AG04449 (cell line): ENCODE measurements at regions of chr1 and their contacts with region 1.

Region 1: DNA sequence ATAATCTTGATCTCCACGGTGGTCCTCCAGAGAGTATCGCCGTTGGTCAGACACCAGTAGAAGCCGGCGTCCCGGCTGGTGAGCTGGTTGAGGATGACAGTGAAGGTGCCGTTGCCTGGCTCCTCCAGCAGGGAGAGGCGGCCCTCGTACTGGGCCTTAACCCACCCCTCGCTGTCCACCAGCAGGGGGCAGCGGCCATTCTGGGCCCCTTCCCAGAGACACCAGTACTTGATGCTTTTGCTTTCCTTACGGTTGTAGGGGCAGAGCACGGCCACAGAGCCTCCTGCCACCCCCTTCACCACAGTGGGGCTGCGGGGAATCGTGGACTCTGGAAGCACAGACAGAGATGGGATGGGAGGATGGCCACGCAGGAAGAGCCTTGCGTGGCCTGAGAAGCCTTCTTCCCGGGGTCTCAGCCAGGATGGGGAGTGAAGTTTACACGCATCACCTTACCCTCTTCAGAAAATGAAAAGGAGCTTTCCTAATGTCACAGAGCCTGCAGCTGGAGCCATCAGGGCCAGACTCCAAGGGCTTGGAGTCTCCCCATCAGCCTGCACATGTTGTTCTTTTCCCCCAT is 10.7 kb downstream of the PIGR start:
- DNase-seq: no peak
- H3K4me3 ChIP-seq: no peak overlapping the region
- CTCF ChIP-seq: peak; percentile 64

Region 2: DNA sequence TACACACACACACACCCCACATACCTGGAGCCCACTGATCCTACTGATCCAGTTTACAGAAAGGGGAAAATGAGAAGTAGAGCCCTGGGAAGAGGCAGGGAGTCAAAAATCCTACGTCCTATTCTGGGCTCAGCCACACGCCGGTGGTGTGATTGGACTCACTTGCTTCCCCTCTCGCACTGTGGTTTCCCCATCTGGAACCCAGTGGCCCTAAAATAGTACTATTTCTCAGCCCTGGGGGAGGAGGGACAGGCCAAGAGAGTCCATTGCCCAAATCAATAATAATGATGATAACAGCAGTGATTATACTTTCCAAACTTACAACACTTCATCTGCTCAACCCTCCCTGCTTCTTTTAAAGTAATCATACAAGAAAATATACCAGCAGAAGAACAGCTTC is 13.6 kb after region 1 on chr1:
- CTCF ChIA-PET with region 1: interaction called, 22 read pairs
- POLR2A ChIA-PET with region 1: no interaction called
- DNase-seq: no peak
- H3K4me3 ChIP-seq: no peak overlapping the region
- CTCF ChIP-seq: no peak